WTC11 (cell line): ENCODE measurements at regions of chr2 and their contacts with region 1.

Region 1: DNA sequence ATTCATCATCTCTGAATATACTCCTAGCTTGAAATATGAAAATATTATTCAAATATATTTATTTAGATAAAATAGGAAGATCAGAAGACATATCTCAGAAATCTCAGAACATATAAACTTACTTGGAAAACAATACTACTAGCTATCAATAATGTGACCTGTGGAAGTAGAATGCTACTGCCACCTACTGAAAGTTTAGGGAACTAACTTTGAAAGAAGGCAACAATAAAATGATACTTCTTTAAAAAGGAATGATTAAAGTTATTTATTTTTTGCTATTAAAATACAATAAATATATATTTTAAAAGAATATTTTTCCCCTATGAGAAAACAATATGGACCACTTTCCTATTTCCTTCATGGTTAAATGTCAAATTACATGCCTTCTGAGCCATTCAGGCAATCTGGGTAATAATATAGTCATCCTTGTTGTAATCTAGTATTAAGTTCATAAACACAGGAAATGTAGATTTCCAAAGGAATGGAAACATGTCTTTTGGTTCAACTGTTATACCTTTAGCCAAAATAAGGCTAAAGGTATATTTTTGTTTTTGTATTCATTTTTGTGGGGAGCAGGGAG is 26.0 kb downstream of the ACADL start:
- DNase-seq: no peak
- ATAC-seq: no peak
- H3K4me3 Mint-ChIP-seq: no peak overlapping the region
- H3K27ac Mint-ChIP-seq: no peak overlapping the region
- H3K4me1 Mint-ChIP-seq: no peaks in the 10 kb centered on the region
- H3K27me3 Mint-ChIP-seq: no peaks in the 10 kb centered on the region
- CTCF ChIP-seq: peak; percentile 59

Region 2: GRCh38 chr2:209977386-209978239 is 221.7 kb before region 1 on chr2:
- CTCF ChIA-PET with region 1: interaction called, 13 read pairs
- POLR2A ChIA-PET with region 1: no interaction called
- DNase-seq: no peak
- ATAC-seq: no peak
- H3K4me3 Mint-ChIP-seq: no peak overlapping the region
- H3K27ac Mint-ChIP-seq: no peak overlapping the region
- H3K4me1 Mint-ChIP-seq: no peaks in the 10 kb centered on the region
- H3K27me3 Mint-ChIP-seq: 0 out of 2 replicates have a peak, but pooled peaks cover 4% of the 10 kb centered on the region
- CTCF ChIP-seq: 0 out of 2 replicates have a peak, but pooled peaks have one; percentile 13

Region 3: DNA sequence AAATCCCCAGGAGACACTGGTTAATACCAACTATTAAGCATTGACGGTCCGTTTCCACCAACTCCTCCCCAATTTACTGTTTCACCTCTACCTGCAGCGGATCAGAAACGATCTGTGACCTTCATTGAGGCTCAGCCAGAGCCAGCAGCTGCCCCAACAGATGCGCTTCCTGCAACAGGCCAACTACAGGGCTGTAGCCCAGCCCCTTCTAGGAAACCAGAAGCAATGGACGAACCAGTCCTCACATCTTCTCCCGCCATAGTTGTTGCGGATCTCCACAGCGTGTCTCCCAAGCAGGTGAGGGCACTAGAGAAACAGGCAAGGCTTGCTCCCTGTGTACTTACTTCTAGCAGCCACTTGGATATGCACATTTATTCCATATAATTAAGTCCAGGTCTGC is 205.3 kb before region 1 on chr2:
- CTCF ChIA-PET with region 1: interaction called, 12 read pairs
- POLR2A ChIA-PET with region 1: no interaction called
- DNase-seq: no peak
- ATAC-seq: peak; percentile 88
- H3K4me3 Mint-ChIP-seq: no peak overlapping the region
- H3K27ac Mint-ChIP-seq: no peak overlapping the region
- H3K4me1 Mint-ChIP-seq: peaks cover 4% of the 10 kb centered on the region; the same call in 1 of the 2 replicates
- H3K27me3 Mint-ChIP-seq: peaks cover 9% of the 10 kb centered on the region
- CTCF ChIP-seq: no peak

Region 4: DNA sequence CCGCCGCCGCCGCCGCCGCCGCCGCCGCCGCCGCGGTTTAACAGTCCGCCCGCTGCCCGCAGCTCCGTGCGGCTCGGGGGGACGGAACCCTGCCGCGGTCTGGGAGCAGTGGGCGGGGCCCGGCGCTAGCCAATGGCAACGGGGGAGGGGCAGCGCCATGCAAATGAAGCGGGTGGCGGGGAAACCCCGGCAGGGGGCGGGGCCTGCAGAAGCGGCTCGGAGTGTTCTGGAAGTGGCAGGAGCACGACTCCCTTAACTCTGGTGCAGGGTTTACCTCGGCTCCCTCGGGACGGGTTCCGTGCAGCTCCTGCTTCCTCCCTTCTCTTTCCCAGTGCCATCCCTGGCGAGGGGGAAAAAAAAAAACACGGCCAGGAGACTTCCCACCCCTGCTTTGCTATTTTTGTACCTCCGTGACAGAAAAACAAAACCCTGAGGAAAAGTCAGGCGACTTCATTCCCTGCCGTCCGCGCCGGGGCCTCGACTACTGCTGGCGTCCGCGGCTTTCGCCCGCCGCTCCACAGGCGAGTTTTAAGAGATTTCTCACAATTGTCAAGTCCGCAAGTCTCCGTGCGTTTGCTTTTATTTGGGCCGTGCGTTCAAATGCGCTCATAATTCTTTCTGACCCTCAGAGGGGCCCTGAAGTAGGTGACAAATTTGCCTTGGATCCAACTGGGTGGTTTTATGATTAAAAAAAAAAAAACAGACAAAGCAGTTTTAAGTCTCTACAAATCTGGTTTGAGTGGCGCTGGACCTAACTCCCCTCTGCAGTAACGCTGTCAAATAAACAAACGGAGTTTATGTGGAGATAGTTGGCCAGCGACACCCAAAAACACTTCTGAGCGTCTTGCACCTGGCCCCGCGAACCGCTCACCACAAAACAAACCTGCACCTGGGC is 27.7 kb before region 1 on chr2 and contains the start of gene KANSL1L:
- CTCF ChIA-PET with region 1: no interaction called
- POLR2A ChIA-PET with region 1: no interaction called
- DNase-seq: peak; percentile 99
- ATAC-seq: peak; percentile 89
- H3K4me3 Mint-ChIP-seq: peak within 1 kb of the TSS; percentile 97
- H3K27ac Mint-ChIP-seq: peak within 1 kb of the TSS; percentile 100
- H3K4me1 Mint-ChIP-seq: peaks cover 22% of the 10 kb centered on the region
- H3K27me3 Mint-ChIP-seq: no peaks in the 10 kb centered on the region
- CTCF ChIP-seq: no peak
- total RNA-seq, gene KANSL1L: 11.1 to 12.2 TPM (median 11.4 TPM) in 3 replicates